T-cell (primary cell): ENCODE measurements at regions of chr6 and their contacts with region 1.

Region 1: DNA sequence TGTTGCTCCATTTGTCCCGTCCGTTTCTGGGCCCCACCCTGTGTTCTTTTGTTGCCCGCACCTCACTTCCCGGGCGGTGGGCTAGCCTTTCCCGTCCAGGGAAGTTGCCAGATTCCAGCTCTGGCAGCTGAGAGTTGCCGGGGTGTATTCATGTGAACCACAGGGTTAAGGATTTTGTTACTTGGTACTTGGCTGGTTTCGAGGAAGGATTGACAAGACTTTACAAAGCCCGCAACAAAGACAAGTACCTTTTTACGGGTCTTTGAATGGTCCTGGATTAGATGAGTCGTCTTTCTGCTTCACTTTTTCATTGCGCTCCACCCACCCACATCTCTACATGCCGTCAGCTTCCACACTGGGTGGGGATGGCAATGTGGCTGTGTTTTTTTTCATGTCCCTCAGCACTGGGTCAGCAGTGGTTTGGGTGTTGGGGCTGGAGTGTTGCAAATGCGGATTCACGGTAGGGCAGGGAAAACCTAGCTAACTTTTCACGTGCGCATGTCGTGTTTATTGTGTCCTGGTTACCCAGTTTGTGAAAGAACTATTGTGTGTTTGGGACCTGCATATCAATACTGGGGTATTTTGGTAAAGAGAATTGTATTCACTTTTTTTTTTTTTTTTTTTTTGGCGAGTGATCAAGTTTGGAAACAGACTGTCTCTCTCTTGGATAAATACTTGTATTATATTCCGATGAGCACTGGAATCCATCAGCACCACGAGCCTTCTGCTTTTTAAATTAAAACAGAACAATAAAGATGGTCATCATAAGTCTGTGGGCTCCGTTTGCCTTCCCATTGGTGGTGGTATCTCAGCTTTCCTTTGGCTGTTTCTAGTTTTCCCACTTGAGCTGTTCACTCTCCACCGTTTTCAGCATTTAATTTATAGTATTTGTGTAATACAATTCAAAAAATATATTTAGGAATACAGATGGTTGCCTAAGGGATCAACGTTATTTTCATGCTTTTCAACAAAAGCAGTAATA is 1.2 kb downstream of the DUSP22 start:
- DNase-seq: peak in 8 of 35 experiments; percentile 8 to 52 (median 22)
- ATAC-seq: no peak
- H3K4me3 ChIP-seq: peak overlapping the region; percentile 52 to 69
- H3K4me3 Mint-ChIP-seq: peak overlapping the region; percentile 78 to 95 (median 86)
- H3K27ac ChIP-seq: peak overlapping the region; percentile 86
- H3K27ac Mint-ChIP-seq: peak overlapping the region; percentile 94 to 97
- H3K4me1 ChIP-seq: peaks cover 13 to 52% of the 10 kb centered on the region in 2 experiments
- H3K4me1 Mint-ChIP-seq: peaks cover 51 to 68% (median 55%) of the 10 kb centered on the region in 3 donors
- H3K27me3 ChIP-seq: no peaks in the 10 kb centered on the region
- H3K27me3 Mint-ChIP-seq: no peaks in the 10 kb centered on the region

Region 2: DNA sequence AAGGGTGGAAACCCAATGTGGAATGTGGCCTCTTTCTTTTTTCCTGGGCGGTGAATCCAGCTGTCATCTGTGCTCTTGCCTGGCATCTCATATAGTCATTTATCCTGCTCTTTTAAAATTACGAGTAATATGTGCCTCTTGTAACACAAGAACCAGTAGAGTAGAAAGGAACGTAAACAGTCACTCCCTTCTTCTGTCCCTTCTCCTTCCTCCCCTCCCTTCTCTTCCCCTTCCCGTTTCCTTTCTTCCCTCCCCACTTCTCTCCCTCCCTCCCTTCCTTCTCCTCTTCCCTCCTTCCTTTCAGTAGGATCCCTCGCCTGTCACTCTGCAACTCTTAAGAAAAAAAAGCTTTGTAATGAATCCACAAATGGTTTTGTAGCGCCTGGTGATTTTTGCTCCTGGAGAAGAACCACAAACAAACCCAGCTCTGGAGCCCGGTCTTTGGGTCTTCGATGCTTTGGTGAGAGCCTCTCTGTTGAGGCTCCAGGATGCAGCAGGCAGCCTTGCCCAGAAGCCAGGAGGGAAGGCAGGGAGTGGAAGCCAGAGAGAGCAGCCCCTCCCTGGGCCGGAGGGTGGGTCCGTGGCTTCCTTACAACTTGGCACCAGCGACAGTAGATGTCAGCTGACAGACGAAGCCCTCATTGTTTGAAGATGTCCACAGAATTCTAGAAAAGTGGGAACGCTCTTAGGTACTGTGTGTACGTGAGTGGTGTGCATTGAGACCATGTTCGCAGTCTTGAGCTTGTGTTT is 13.8 kb after region 1 on chr6:
- CTCF ChIA-PET with region 1: no interaction called
- POLR2A ChIA-PET with region 1: interaction called in 1 of 2 experiments, 11 read pairs
- DNase-seq: no peak
- ATAC-seq: no peak
- H3K4me3 ChIP-seq: no peak overlapping the region
- H3K4me3 Mint-ChIP-seq: no peak overlapping the region
- H3K27ac ChIP-seq: no peak overlapping the region
- H3K27ac Mint-ChIP-seq: no peak overlapping the region
- H3K4me1 ChIP-seq: peaks cover 0 to 8% of the 10 kb centered on the region in 2 experiments
- H3K4me1 Mint-ChIP-seq: peaks cover 2 to 12% (median 6%) of the 10 kb centered on the region in 3 donors
- H3K27me3 ChIP-seq: no peaks in the 10 kb centered on the region
- H3K27me3 Mint-ChIP-seq: no peaks in the 10 kb centered on the region

Region 3: DNA sequence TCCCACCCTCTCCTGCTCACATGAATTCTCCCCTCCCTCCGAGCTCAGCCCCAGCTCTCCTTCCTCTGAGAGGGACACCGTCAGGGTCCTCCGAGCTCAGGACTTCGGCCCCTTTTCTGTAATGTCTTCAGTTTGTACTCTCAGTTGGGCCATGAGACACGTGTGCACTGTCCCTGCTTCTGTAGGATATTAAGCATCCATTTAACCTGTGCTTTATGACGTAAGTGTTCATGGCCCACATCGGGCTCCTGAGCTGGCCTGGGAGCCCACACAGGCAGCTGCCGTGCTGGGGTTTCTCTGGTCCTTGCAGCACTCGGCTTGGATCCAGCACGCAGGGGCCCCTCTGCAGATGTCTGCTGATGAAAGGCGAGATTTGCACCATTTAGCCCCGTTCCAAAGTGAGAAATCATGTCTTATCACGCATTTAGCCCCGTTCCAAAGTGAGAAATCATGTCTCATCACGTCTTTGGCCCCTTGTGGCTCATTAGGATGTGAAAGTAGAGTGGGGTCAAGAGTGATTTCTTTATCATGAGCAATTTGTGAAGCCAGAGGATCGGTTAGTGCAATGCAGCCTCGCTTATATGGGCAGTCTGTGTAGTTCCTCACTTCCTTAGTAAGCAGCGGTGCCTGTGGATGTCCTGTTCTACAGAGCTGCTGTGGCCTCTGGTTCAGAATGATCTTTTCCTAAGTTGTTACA is 24.1 kb after region 1 on chr6:
- CTCF ChIA-PET with region 1: interaction called in 1 of 2 experiments, 13 read pairs
- POLR2A ChIA-PET with region 1: interaction called in 1 of 2 experiments, 5 read pairs
- DNase-seq: no peak
- ATAC-seq: no peak
- H3K4me3 ChIP-seq: no peak overlapping the region
- H3K4me3 Mint-ChIP-seq: no peak overlapping the region
- H3K27ac ChIP-seq: no peak overlapping the region
- H3K27ac Mint-ChIP-seq: no peak overlapping the region
- H3K4me1 ChIP-seq: peaks cover 4 to 10% of the 10 kb centered on the region in 2 experiments
- H3K4me1 Mint-ChIP-seq: peaks cover 22 to 35% (median 29%) of the 10 kb centered on the region in 3 donors
- H3K27me3 ChIP-seq: no peaks in the 10 kb centered on the region
- H3K27me3 Mint-ChIP-seq: no peaks in the 10 kb centered on the region

Region 4: DNA sequence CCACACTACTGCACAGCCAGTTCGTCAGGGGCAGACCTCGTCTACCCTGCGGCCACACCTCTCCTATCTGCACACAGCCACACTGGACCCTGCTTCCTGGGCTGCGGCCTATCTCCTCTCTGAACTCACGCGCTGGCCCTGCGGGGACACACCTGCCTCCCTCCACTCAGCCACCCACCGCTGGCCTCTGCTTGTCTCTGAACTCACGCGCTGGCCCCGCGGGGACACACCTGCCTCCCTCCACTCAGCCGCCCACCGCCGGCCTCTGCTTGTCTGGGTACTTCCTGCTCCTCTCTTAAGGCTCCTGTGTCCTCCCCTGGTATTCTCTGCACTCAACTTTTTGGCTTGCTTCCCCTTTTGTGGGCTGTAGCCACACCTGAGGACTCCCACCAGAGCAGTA is 311.1 kb after region 1 on chr6:
- CTCF ChIA-PET with region 1: no interaction called
- POLR2A ChIA-PET with region 1: no interaction called
- DNase-seq: no peak
- ATAC-seq: no peak
- H3K4me3 ChIP-seq: no peak overlapping the region
- H3K4me3 Mint-ChIP-seq: no peak overlapping the region
- H3K27ac ChIP-seq: no peak overlapping the region
- H3K27ac Mint-ChIP-seq: no peak overlapping the region
- H3K4me1 ChIP-seq: no peaks in the 10 kb centered on the region
- H3K4me1 Mint-ChIP-seq: peaks cover 0 to 8% (median 0%) of the 10 kb centered on the region in 3 donors
- H3K27me3 ChIP-seq: no peaks in the 10 kb centered on the region
- H3K27me3 Mint-ChIP-seq: no peaks in the 10 kb centered on the region

Region 5: GRCh38 chr6:1562171-1562955 is 1268.9 kb after region 1 on chr6:
- CTCF ChIA-PET with region 1: no interaction called
- POLR2A ChIA-PET with region 1: no interaction called
- DNase-seq: no peak
- ATAC-seq: no peak
- H3K4me3 ChIP-seq: no peak overlapping the region
- H3K4me3 Mint-ChIP-seq: no peak overlapping the region
- H3K27ac ChIP-seq: no peak overlapping the region
- H3K27ac Mint-ChIP-seq: no peak overlapping the region
- H3K4me1 ChIP-seq: no peaks in the 10 kb centered on the region
- H3K4me1 Mint-ChIP-seq: no peaks in the 10 kb centered on the region
- H3K27me3 ChIP-seq: peaks cover 0 to 6% of the 10 kb centered on the region in 2 experiments
- H3K27me3 Mint-ChIP-seq: peaks cover 9 to 11% of the 10 kb centered on the region in 2 donors